ENCODE measurements at regions of chr4 and their contacts with region 1.

Region 1: DNA sequence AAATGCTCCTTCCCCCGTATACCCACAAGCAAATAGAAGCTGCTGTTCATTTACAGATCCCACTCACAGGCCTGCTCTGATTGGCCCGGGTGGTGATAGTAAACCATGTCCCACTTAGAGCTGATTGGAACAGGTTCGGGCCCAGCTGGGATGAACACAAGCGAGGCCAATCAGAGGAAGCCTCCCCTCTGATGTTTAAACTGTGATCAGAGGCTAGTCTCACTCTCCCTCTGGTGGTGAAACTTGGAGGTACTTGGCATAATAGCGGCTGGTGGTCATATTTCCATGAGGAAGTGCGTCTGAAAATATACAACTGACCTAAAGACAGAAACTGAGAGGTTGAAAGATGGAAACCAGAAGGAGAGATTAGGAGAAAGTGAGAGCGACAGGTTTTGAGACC is 51.5 kb upstream of the TRPC3 start:
- DNase-seq: peak; percentile 11
- ATAC-seq: peak; percentile 97
- H3K4me3 ChIP-seq: no peak overlapping the region
- H3K27ac ChIP-seq: no peak overlapping the region
- H3K4me1 ChIP-seq: no peaks in the 10 kb centered on the region
- H3K27me3 ChIP-seq: no peaks in the 10 kb centered on the region
- CTCF ChIP-seq: peak; percentile 58 to 66 (median 58)
- EP300 ChIP-seq: no peak
- POLR2A ChIP-seq: no peak
- RAD21 ChIP-seq: peak; percentile 81

Region 2: DNA sequence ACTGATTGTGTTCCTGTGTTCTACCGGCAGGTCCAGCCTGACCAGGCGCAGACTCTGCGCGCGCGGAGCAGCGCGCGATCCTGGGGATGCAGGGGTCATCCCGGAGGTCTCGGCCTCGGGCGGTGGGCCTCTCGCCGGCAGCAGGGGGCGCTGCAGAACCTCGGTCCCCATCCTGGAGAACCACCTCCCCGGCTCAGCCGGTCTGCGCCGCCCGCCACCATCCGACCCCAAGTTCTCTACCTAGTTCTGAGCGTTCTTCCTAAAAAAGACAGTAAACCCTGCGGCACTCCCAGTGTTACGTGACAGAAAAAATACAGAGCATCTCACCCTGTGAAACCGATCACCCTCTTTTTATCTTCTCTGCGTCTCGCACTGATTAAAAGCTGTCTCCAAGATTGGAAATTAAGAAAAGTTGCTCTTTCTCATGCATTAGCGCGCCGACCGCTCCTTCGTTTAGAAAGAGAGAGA is 53.1 kb before region 1 on chr4:
- CTCF ChIA-PET with region 1: interaction called, 8 read pairs
- POLR2A ChIA-PET with region 1: no interaction called
- RAD21 ChIA-PET with region 1: interaction called, 5 read pairs
- SMC1A ChIA-PET with region 1: interaction called, 4 read pairs
- in situ Hi-C with region 1: no loop called
- intact Hi-C with region 1: loop called (anchors 1 kb)
- DNase-seq: no peak
- ATAC-seq: peak; percentile 92
- H3K4me3 ChIP-seq: peak overlapping the region; percentile 63
- H3K27ac ChIP-seq: no peak overlapping the region
- H3K4me1 ChIP-seq: peaks cover 4% of the 10 kb centered on the region
- H3K27me3 ChIP-seq: peaks cover 2 to 22% of the 10 kb centered on the region in 2 experiments
- CTCF ChIP-seq: peak; percentile 47 to 71 (median 67)
- EP300 ChIP-seq: no peak
- POLR2A ChIP-seq: no peak
- RAD21 ChIP-seq: peak; percentile 56

Measured in GM12878 (cell line).